CD4-positive, alpha-beta T cell (primary cell): ENCODE measurements at regions of chr15 and their contacts with region 1.

Region 1: DNA sequence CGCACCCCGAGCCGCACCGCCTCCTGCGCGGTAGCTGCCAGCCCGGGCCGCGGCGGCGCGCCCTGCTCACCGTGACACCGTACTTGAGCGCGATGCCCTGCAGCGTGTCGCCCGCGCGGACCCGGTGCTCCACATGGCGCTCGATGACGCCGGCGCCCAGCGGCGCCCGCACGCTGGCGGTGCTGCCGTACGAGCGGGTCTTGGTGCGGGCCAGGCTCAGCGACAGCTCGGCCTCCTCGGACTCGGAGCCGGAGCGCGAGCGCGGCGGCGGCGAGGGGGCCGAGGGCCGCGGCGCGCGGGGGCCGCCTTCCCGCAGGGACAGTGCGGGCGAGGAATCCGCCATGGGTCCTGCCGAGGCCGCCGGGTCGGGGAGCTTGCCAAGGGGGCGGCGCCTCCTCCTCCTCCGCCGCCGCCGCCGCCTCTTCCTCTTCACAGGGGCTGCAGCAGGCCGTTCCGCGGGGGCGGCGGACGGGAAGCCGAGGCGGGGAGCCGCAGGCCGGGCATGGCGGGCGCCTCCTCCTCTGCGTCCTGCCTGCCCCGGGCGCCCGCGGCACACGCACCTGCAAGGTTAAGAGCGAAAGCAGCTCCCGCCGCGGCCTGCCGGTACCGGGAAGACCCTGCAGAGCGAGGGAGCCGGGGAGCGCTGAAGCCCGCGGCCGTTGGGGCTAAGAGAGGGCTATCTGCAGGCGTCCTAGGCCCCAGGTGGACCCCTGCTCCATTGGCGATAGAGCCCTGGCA is at the start of gene LYSMD2:
- DNase-seq: peak; percentile 28 to 84 (median 68)
- ATAC-seq: peak; percentile 56
- H3K4me3 ChIP-seq: peak within 1 kb of the TSS; percentile 78
- H3K4me3 Mint-ChIP-seq: peak within 1 kb of the TSS; percentile 92
- H3K27ac ChIP-seq: peak within 1 kb of the TSS; percentile 81 to 83
- H3K27ac Mint-ChIP-seq: peak within 1 kb of the TSS; percentile 97
- H3K4me1 ChIP-seq: peaks cover 57% of the 10 kb centered on the region
- H3K4me1 Mint-ChIP-seq: peaks cover 61% of the 10 kb centered on the region
- H3K27me3 ChIP-seq: no peaks in the 10 kb centered on the region
- H3K27me3 Mint-ChIP-seq: no peaks in the 10 kb centered on the region
- CTCF ChIP-seq: no peak
- total RNA-seq, gene LYSMD2: 17.4 TPM

Region 2: DNA sequence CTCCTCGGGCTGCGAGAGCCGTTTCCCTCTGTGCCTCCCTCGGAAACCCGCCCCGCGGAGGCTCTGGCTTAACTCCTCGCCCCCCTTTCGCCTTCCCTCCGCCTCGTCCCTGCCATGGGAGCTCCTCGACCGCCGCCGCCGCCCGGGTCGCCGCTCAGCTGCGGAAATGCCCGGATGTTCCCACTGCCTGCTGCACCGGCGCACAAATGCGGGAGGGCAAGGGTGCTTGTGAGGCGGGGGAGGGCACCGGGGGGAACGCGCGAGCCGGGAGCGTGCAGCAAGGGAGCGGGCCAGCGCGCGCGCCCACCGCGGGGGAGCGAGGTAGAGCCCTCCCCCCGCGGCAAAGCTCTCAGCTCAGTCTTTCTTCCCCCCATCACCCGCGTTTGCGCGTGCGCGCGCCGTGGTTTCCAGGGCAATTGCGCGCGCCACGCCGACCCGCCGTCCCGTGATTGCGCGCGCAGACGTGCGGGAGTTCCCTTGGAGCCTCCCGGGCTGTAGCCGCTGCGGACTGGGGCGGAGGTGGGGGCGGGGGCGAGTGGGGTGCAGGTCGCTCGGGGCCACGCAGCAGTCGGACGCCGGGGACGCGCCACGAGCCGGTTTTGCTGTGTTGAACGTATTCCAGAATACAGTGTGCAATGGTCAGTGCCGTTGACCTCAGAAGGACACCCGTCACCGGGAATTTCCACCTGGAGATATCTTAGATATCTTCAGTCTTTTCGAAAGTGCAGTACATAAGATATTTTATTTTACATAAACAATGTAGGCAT is 114.7 kb before region 1 on chr15 and contains the start of gene DMXL2:
- CTCF ChIA-PET with region 1: no interaction called
- POLR2A ChIA-PET with region 1: interaction called, 10 read pairs
- intact Hi-C with region 1: no loop called
- DNase-seq: peak; percentile 31 to 86 (median 58)
- ATAC-seq: peak; percentile 77
- H3K4me3 ChIP-seq: peak within 1 kb of the TSS; percentile 76
- H3K4me3 Mint-ChIP-seq: peak within 1 kb of the TSS; percentile 92
- H3K27ac ChIP-seq: no peak within 1 kb of the TSS
- H3K27ac Mint-ChIP-seq: peak within 1 kb of the TSS; percentile 31
- H3K4me1 ChIP-seq: peaks cover 7% of the 10 kb centered on the region
- H3K4me1 Mint-ChIP-seq: peaks cover 15% of the 10 kb centered on the region
- H3K27me3 ChIP-seq: no peaks in the 10 kb centered on the region
- H3K27me3 Mint-ChIP-seq: peaks cover 14% of the 10 kb centered on the region
- CTCF ChIP-seq: no peak
- total RNA-seq, gene DMXL2: 4.7 to 5.5 TPM

Region 3: DNA sequence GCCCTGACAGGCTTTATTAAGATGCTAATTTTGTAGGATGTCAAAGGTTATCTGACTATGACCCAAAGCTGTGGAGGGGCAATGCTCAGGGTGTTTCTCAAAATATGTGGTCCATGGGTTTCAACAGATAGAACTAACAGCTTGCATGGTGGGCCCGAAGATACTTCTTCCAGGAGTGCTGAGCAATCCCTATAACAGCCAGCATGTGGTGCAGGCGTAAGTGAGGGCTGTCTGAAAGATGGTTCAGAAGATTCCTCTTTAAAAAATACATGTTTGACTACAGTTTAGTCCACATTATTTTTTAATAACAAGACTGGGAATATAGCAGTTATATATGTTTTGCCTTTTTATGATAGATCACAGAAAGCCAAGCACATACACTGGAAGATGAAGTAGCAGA is 48.6 kb before region 1 on chr15:
- CTCF ChIA-PET with region 1: no interaction called
- POLR2A ChIA-PET with region 1: interaction called, 3 read pairs
- intact Hi-C with region 1: loop called in 1 of 2 experiments (anchors 5 kb)
- DNase-seq: peak in 3 of 14 experiments; percentile 4 to 31 (median 26)
- ATAC-seq: peak; percentile 49
- H3K4me3 ChIP-seq: no peak overlapping the region
- H3K4me3 Mint-ChIP-seq: no peak overlapping the region
- H3K27ac ChIP-seq: no peak overlapping the region
- H3K27ac Mint-ChIP-seq: no peak overlapping the region
- H3K4me1 ChIP-seq: no peaks in the 10 kb centered on the region
- H3K4me1 Mint-ChIP-seq: peaks cover 6% of the 10 kb centered on the region
- H3K27me3 ChIP-seq: peaks cover 8 to 18% of the 10 kb centered on the region in 2 experiments
- H3K27me3 Mint-ChIP-seq: peaks cover 41% of the 10 kb centered on the region
- CTCF ChIP-seq: peak; percentile 13

Region 4: DNA sequence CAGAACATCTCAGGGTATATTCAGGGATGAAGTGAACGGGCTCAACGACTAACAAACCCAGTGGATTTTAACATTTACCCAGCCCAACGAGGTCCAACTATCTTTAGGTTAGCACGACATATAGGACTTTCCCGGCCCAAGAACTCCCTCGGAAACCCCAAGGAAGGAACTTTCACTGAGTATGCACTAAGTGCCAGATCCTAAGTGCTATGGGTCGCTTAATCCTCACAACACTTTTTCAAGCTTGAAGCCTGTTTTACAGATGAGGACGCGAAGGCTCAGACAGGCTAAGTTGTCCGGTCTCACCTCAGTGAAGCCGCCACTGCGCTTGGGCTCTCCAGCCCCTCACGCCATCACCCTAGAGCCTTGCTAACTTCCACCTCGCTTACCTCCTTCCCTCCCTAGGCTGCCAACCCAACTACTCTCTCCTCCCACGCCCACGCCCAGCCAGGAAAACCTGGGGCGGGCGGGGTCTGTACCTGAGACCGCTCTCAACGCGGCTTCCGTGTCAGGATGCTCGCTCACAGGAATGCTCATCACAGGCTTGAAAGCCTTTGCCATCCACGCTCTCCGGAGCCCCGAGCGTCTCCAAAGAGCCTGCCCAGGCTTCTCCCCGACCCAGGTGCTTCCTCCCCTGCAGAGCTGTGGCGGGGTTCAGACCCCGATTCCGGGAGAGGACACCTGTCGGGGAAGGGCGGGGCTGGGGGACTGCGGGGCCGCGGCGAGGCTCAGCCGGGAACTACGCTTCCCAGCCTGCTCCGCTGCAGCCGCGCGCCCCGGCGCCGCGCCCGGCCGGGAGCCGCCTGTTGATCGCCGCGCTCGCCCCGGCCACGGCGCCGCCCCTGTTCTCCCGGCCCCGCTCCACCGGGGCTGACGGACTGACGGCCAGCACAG is 13.6 kb after region 1 on chr15 and contains the start of gene TMOD2:
- CTCF ChIA-PET with region 1: interaction called, 8 read pairs
- POLR2A ChIA-PET with region 1: interaction called, 45 read pairs
- intact Hi-C with region 1: loop called in 1 of 2 experiments (anchors 2 kb)
- DNase-seq: peak in 12 of 14 experiments; percentile 18 to 75 (median 50)
- ATAC-seq: peak; percentile 85
- H3K4me3 ChIP-seq: peak within 1 kb of the TSS; percentile 63
- H3K4me3 Mint-ChIP-seq: peak within 1 kb of the TSS; percentile 92
- H3K27ac ChIP-seq: no peak within 1 kb of the TSS
- H3K27ac Mint-ChIP-seq: peak within 1 kb of the TSS; percentile 53
- H3K4me1 ChIP-seq: peaks cover 15% of the 10 kb centered on the region
- H3K4me1 Mint-ChIP-seq: peaks cover 51% of the 10 kb centered on the region
- H3K27me3 ChIP-seq: no peaks in the 10 kb centered on the region
- H3K27me3 Mint-ChIP-seq: peaks cover 4% of the 10 kb centered on the region
- CTCF ChIP-seq: no peak
- total RNA-seq, gene TMOD2: 5.6 to 6.9 TPM

Region 5: DNA sequence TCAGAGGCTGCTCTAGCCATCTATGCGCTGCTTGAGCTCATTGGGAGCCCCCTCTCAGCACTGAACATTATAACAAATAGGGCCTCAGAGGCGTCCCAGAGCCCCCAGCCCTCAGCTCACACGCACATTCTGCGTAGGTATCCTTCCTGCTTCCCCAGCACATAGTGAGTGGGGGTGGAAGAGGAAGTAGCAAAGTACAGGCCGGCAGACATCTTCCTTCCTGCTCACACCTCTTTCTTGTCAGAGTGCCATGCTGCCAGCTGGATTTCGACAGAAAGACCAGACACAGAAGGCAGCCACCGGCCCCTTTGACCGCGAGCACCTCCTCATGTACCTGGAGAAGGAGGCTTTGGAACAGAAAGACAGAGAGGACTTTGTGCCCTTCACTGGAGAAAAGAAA is 30.6 kb after region 1 on chr15:
- CTCF ChIA-PET with region 1: no interaction called
- POLR2A ChIA-PET with region 1: interaction called, 13 read pairs
- intact Hi-C with region 1: loop called in 1 of 2 experiments (anchors 5 kb)
- DNase-seq: peak in 4 of 14 experiments; percentile 25 to 40 (median 34)
- ATAC-seq: peak; percentile 78
- H3K4me3 ChIP-seq: no peak overlapping the region
- H3K4me3 Mint-ChIP-seq: no peak overlapping the region
- H3K27ac ChIP-seq: no peak overlapping the region
- H3K27ac Mint-ChIP-seq: peak overlapping the region; percentile 80
- H3K4me1 ChIP-seq: peaks cover 8% of the 10 kb centered on the region
- H3K4me1 Mint-ChIP-seq: peaks cover 16% of the 10 kb centered on the region
- H3K27me3 ChIP-seq: no peaks in the 10 kb centered on the region
- H3K27me3 Mint-ChIP-seq: no peaks in the 10 kb centered on the region
- CTCF ChIP-seq: no peak

Region 6: DNA sequence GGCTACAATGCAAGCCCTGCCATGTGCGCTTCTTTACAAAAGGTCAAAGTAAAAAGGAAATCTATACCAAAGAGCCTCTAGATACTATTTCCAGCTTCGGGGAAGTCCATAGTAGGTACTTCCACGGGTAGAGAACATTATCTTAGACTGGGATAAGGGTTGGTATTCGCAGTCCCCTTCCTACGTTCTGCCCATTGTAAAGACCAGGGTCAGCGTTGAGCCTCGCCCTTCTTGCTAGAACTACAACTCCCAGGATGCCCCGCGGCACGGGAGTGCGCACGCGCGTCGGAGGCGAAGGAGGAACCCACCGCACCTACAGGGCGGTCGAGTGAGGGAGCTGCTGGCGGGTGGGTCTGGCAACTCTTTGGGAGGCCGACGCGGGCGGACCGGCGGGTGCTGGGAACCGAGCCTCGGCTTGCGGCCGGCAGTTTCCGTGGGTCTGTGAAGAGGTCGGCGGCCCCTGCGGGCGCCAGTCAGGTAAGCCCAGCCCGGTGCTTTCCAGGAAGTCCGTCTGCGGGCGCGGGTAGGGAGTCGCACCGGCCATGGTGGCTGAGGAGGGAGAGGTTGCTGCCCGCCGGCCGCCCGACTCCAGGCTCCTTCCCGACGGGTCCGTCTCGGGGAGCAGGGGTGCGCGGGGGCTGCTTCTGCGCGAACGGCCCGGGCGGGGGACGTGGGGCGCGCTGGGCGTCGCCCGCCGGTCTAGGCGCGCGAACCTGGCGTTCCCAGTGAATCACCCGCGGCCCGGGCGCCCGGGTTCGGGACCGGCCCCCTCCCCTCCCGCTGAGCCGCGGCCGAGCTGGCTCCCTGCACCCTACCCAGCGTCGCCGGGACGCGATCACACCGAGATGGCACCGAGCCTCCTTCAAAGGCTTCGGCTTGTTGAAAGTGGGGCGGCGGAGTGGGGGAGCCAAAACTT is 92.2 kb after region 1 on chr15 and contains the start of gene TMOD3:
- CTCF ChIA-PET with region 1: no interaction called
- POLR2A ChIA-PET with region 1: interaction called, 4 read pairs
- intact Hi-C with region 1: loop called in 1 of 2 experiments (anchors 5 kb)
- DNase-seq: peak; percentile 83 to 93 (median 86)
- ATAC-seq: peak; percentile 82
- H3K4me3 ChIP-seq: peak within 1 kb of the TSS; percentile 82
- H3K4me3 Mint-ChIP-seq: peak within 1 kb of the TSS; percentile 100
- H3K27ac ChIP-seq: peak within 1 kb of the TSS; percentile 63 to 85
- H3K27ac Mint-ChIP-seq: peak within 1 kb of the TSS; percentile 91
- H3K4me1 ChIP-seq: peaks cover 15% of the 10 kb centered on the region
- H3K4me1 Mint-ChIP-seq: peaks cover 52% of the 10 kb centered on the region
- H3K27me3 ChIP-seq: no peaks in the 10 kb centered on the region
- H3K27me3 Mint-ChIP-seq: no peaks in the 10 kb centered on the region
- CTCF ChIP-seq: no peak
- total RNA-seq, gene TMOD3: 37.6 to 39.0 TPM

Region 7: DNA sequence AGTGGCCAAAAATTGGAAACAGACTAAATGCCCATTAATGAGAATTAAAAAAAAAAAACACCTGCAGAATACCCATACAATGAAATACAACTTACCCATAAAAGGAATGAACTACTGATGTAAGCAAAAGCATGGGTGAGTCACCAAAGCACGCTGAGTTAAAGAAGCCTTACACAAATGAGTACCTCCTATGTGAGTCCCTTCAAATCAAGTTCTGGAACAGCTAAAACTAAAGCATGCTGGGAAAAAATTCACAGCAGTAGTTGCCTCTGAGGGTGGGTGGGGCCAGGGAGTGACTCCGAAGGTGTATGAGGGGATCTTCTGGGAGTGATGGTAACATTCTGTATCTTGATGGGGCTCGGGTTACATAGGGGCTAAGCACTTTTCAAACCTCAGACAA is 546.7 kb after region 1 on chr15:
- CTCF ChIA-PET with region 1: no interaction called
- POLR2A ChIA-PET with region 1: no interaction called
- intact Hi-C with region 1: no loop called
- DNase-seq: no peak
- ATAC-seq: no peak
- H3K4me3 ChIP-seq: no peak overlapping the region
- H3K4me3 Mint-ChIP-seq: no peak overlapping the region
- H3K27ac ChIP-seq: no peak overlapping the region
- H3K27ac Mint-ChIP-seq: no peak overlapping the region
- H3K4me1 ChIP-seq: no peaks in the 10 kb centered on the region
- H3K4me1 Mint-ChIP-seq: no peaks in the 10 kb centered on the region
- H3K27me3 ChIP-seq: no peaks in the 10 kb centered on the region
- H3K27me3 Mint-ChIP-seq: no peaks in the 10 kb centered on the region
- CTCF ChIP-seq: no peak